Tibial artery (tissue), 4 donors: ENCODE measurements at regions of chrX and their contacts with region 1.

Region 1: DNA sequence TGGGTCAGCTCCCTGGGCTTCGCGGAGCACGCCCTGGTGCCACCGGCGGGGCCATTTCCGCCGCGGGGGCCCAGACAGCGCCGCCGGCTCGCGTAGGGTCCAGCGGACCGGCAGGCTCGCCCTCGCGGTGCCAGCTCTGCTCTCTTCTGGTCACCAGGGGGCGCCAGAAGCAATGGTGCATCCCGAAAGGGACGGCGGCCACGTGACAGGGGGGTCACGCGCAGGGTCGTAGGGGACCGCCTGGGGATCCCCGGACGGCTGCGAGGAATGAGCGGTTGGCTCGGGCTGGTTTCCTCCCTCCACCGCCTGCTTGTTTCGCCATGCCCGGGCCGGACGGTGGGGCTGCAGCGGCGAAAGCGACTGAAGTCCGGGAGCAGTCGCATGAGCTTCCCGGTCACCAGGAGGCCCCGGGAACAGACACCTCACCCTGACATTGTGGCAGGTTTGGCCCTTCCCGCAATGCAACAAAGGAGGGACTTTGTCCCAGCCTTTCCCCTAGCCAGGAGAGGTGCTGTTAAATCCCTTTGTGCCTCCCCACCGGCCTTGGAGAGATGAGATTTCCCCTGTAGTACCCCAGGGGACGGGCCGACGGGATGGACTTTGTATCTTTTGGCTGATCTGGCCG is 15.8 kb downstream of the ZCCHC12 start:
- DNase-seq: peak; percentile 78
- H3K4me3 ChIP-seq: peak overlapping the region; percentile 50 to 52
- H3K27ac ChIP-seq: no peak overlapping the region
- H3K4me1 ChIP-seq: peaks cover 0 to 4% (median 0%) of the 10 kb centered on the region in 4 donors
- H3K27me3 ChIP-seq: no peaks in the 10 kb centered on the region
- CTCF ChIP-seq: peak; percentile 64 to 69

Region 2: GRCh38 chrX:119015407-119016237 is 176.2 kb after region 1 on chrX:
- intact Hi-C with region 1: no loop called
- DNase-seq: peak; percentile 53 to 62
- H3K4me3 ChIP-seq: no peak overlapping the region
- H3K27ac ChIP-seq: no peak overlapping the region
- H3K4me1 ChIP-seq: no peaks in the 10 kb centered on the region
- H3K27me3 ChIP-seq: no peaks in the 10 kb centered on the region
- CTCF ChIP-seq: no peak

Region 3: GRCh38 chrX:119067023-119067739 is 227.7 kb after region 1 on chrX:
- intact Hi-C with region 1: loop called (anchors 5 kb)
- DNase-seq: peak; percentile 65 to 71
- H3K4me3 ChIP-seq: no peak overlapping the region
- H3K27ac ChIP-seq: no peak overlapping the region
- H3K4me1 ChIP-seq: no peaks in the 10 kb centered on the region
- H3K27me3 ChIP-seq: no peaks in the 10 kb centered on the region
- CTCF ChIP-seq: peak; percentile 52 to 63